Right ventricle myocardium inferior (tissue), 1 donor: ENCODE measurements at regions of chr14 and their contacts with region 1.

Region 1: GRCh38 chr14:103808403-103809001 is 38.9 kb downstream of the PPP1R13B start:
- DNase-seq: peak; percentile 78
- ATAC-seq: peak; percentile 82

Region 2: DNA sequence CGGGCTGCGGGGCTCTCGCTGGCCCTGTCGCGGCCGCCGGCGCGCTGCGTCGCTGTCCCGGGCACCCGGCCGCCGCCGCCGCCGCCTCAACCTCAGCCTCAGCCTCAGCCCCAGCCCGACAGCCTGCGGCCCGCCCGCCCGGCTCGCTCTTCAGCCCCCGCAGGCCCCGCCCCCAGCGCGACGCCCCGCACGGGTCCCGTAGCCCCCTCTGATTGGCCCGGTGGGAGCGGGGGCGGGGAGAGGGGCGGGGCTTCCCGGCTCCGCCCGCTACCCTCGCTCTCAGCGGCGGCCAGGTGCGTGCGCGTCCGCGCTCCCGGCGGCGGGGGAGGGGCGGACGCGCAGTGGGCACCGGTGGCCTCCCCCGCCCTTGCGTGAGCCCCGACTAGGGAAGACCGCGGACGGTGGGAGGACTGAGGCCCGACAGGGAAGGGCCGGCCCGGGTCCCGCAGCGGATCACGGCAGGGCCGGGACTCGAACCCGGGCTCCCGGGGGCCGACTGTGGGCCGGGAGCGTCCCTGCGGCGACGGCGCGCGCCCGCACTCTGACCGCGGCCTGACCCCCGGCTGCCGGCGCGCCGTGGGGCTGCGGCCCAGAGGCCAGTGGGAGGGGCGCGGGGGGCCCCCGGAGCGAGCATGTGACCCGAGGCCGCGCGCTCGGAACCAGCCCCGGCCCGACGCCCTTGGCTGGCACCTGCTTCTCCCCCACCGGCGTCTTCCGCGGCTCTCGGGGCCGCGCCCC is 39.1 kb after region 1 on chr14 and contains the start of gene PPP1R13B:
- intact Hi-C with region 1: loop called (anchors 1 kb)
- DNase-seq: peak; percentile 94
- ATAC-seq: peak; percentile 97
- total RNA-seq, gene PPP1R13B: 101 TPM

Region 3: GRCh38 chr14:103862393-103862782 is 53.9 kb after region 1 on chr14:
- intact Hi-C with region 1: loop called (anchors 5 kb)
- DNase-seq: peak; percentile 4
- ATAC-seq: no peak

Region 4: DNA sequence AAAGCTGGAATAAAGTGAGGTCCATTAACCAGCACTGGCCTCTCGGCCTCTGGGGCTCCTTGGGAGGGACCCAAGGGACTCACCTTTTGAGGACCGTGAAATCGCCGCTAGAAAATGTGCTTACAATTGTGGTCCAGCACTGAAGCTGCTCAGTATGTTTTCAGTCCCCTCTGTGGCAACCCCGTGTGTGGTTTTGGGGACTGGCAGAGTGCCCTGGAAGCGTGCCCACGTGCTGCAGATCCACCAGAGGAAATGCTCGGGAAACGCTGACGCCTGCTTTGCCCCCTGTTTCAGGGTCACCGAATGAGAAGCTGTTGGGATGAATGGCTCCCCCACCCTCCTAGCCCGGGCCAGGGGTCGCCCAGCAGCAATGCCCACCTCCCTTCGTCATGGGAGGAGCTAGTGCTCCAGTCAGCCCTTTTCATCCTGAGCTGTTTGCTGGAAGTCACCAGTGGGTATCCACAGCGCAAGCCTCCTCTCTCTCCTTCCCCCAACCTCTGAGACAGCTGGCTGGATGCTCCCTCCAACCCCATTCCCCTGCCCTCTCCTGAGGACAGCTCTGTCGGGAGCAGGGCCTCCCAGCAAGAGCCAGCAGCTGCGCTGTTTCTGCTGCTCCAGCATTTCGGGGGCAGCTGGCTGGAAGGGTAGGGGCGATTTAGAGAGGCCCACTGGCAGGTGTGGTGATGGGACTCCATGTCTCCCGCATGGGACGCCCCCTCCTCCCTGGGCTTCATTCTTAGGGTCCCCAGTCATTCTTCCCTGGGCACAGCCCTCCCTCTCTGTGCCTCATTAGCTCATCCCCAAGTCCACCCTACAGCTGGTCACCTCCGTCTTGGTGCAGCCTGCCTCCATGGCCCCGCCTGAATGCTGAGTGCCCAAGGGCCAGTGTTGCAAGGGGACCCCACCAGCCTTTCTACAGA is 72.1 kb after region 1 on chr14:
- intact Hi-C with region 1: loop called (anchors 2 kb)
- DNase-seq: peak; percentile 91
- ATAC-seq: peak; percentile 65

Region 5: DNA sequence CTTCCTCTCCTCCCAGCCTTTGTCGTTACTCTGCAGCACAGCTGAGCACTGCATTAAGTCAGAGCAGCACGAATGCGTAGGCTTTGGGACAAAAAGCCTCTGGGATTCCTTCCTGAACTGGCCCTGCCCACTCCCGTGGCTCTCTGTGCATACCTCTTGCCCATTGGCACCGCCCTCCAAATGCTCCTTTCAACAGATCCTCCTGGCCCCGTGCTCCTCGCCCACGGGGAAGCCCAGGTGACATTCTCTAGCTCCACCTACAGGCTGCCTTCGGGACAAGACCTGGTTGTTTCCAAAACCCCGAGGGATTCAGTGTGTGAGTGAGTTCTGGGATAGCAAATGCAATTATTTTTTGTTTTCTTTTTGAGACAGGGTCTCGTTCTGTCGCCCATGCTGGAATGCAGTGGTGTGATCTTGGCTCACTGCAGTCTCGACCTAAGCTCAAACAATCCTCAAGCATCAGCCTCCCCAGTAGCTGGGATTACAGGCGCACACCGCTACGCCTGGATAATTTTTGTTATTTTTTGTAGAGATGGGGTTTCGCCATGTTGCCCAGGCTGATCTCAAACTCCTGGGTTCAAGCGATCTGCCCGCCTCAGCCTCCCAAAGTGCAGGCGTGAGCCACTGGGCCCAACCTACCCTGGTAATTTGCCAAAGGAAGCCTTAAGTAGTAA is 101.9 kb after region 1 on chr14:
- intact Hi-C with region 1: loop called (anchors 1 kb)
- DNase-seq: peak; percentile 83
- ATAC-seq: peak; percentile 97

Region 6: GRCh38 chr14:103973354-103973753 is 164.9 kb after region 1 on chr14:
- intact Hi-C with region 1: loop called (anchors 10 kb)
- DNase-seq: no peak
- ATAC-seq: peak; percentile 39